ENCODE measurements at regions of chr15 and their contacts with region 1.

Region 1: DNA sequence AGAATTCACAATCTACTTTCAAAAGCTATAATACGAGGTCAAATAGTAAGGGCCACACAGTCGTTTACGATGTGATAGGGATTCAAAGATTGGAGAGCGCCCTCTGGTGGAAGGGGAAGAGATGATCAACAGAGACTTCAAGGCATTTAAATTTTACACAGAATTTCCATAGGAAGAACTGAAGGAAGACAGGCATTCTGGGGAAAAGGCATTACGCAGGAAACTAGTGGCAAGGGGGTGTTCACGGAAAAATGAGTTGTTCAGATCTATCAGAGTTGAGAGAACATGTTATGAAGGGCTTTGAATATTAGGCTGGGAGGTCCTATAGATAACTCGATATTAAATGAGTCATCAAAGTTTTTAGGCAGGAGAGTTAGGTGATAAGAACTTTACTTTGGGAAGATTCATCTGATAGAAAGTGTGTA is 128.7 kb downstream of the FRMD5 start:
- DNase-seq: peak; percentile 52
- CTCF ChIP-seq: peak; percentile 69

Region 2: DNA sequence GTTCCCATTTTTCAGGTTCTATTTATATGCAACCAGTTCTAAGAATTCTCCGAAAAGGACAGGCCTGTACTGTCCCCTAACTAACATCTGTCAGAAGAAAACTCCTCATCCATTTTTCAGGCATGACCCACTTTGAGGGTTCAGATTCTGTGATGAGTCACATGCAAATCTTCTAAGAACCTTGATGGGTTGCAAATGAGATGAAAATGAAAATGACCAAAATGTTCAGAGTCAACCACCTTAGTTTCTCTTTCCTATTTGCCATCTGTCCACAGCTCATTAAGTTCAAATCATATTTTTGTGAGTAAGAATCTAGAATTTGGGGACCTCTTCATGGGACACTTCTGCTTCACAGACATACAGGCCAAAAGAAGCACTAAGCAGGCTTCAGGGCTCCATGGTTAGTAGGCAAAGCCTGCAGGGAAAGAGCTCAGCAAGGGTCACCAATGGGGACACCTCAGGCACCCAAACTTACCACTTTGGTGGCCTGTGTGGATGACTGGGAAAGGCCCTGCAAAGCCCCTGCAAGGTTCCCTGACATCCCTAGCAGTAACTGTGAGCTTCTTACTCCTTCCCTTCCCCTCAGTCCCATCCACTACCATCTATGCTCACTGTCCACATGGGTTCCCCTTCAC is 117.5 kb before region 1 on chr15:
- CTCF ChIA-PET with region 1: interaction called, 19 read pairs
- POLR2A ChIA-PET with region 1: no interaction called
- DNase-seq: peak; percentile 46
- CTCF ChIP-seq: no peak

Region 3: DNA sequence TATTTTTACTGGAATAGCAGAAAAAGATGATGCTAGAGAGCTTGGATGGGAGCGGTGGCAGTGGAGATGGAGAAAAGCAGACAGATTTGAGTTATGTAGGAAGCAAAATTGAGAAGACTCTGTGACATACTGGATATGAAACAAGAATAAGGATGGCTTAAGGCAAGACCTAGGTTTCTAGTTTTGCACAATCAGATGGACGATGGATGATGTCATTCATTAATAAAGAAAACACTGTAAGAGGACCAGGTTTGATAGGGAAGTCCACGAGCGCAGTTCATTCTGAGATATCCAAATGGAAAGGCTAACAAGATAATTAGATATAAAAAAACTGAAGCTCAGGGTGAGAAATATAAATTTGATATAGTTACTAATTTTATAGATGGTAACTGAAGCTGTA is 12.9 kb before region 1 on chr15:
- CTCF ChIA-PET with region 1: interaction called, 30 read pairs
- POLR2A ChIA-PET with region 1: no interaction called
- DNase-seq: no peak
- CTCF ChIP-seq: no peak

Region 4: DNA sequence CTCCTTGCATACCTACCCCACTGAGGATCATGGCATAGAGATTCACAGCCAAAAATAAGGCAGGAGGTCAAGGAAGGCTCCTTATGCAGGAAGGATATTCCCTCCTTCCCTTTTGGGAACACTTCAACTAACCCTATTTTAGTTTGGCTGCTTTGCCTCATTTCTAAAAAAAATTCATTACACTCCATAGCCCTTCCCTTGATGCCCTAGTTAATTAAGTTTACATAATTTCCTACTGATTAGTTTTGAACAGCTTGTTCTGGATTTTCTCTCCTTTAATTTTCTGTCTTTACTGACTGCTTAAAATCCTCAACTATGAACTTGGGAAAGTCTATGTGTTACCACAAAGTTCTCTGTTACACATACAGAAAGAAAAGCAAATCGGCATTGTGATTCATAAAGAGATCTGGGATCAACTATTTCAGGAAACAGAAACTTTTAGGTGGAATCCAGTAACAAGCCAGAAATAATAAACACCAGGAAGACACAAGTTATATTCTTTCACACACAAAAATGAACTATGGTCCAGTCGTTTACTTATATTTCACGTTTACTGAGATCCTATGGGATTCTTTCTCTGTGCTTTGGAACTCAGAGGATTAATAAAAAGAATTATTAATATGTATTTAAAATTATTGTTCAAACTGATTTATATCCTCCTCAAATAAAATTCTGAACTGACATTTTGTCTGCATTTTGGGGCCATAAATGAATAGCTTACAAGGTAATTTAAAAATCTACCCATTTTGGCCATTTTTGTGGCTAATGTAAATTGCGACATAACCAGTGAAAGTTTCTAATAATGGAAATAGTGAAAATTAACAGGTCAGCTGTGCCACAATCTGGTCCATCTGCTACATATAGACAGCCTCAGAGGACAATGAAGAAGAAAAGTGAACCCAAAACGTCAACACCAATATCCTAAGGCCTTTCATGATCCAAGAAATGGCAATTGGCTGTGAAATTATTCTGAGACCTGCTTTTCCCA is 15.0 kb after region 1 on chr15:
- CTCF ChIA-PET with region 1: interaction called, 11 read pairs
- POLR2A ChIA-PET with region 1: no interaction called
- DNase-seq: no peak
- CTCF ChIP-seq: no peak

Measured in GM10248 (cell line).